CD4-positive, alpha-beta T cell (primary cell): ENCODE measurements at regions of chr22 and their contacts with region 1.

Region 1: GRCh38 chr22:19479357-19480172 is at the start of gene CDC45:
- DNase-seq: peak; percentile 88 to 98 (median 91)
- ATAC-seq: peak; percentile 89
- H3K4me3 ChIP-seq: peak within 1 kb of the TSS; percentile 75
- H3K4me3 Mint-ChIP-seq: peak within 1 kb of the TSS; percentile 96
- H3K27ac ChIP-seq: peak within 1 kb of the TSS; percentile 95 to 98
- H3K27ac Mint-ChIP-seq: peak within 1 kb of the TSS; percentile 100
- H3K4me1 ChIP-seq: peaks cover 22% of the 10 kb centered on the region
- H3K4me1 Mint-ChIP-seq: peaks cover 31% of the 10 kb centered on the region
- H3K27me3 ChIP-seq: no peaks in the 10 kb centered on the region
- H3K27me3 Mint-ChIP-seq: no peaks in the 10 kb centered on the region
- CTCF ChIP-seq: no peak
- total RNA-seq, gene CDC45: 0.75 to 0.82 TPM

Region 2: DNA sequence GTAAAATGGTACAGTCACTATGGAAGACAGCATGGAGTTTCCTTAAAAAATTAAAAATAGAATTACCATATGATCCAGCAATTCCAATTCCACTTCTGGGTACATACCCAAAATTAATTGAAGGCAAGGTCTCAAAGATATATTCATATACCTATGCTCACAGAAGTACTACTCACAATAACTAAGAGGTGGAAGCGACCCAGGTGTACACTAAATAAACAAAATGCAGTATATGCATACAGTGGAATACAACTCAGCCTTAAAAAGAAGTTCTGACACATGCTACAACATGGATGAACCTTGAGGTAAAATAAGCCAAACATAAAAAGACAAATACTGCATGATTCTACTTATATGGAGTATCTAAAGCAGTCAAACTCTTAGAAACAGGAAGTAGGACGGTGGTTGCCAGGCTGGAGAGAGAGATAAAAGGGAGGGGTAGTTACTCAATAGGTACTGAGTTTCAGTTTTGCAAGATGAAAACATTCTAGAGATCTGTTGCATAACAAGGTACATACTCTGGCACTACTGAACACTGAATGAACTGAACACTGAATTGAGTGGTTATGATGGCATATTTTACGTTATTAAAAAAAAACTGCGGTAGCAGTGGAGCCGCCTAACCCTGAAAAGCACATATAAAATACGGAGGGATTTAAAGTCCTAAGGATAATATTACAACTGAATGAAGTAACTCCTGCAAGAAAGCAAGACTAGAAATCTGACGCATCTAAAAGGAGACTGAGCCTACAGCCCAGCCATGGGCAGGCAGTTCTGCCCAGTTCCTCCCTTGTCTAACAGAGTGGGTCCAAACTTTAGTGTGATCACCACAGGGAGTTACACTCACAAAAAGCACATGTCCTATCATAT is 370.1 kb before region 1 on chr22:
- CTCF ChIA-PET with region 1: no interaction called
- POLR2A ChIA-PET with region 1: no interaction called
- intact Hi-C with region 1: loop called in 1 of 2 experiments (anchors 1 kb)
- DNase-seq: peak; percentile 28 to 88 (median 52)
- ATAC-seq: peak; percentile 84
- H3K4me3 ChIP-seq: peak overlapping the region; percentile 40
- H3K4me3 Mint-ChIP-seq: peak overlapping the region; percentile 84
- H3K27ac ChIP-seq: peak overlapping the region; percentile 85 to 90
- H3K27ac Mint-ChIP-seq: peak overlapping the region; percentile 86
- H3K4me1 ChIP-seq: peaks cover 62% of the 10 kb centered on the region
- H3K4me1 Mint-ChIP-seq: peaks cover 75% of the 10 kb centered on the region
- H3K27me3 ChIP-seq: no peaks in the 10 kb centered on the region
- H3K27me3 Mint-ChIP-seq: no peaks in the 10 kb centered on the region
- CTCF ChIP-seq: no peak

Region 3: DNA sequence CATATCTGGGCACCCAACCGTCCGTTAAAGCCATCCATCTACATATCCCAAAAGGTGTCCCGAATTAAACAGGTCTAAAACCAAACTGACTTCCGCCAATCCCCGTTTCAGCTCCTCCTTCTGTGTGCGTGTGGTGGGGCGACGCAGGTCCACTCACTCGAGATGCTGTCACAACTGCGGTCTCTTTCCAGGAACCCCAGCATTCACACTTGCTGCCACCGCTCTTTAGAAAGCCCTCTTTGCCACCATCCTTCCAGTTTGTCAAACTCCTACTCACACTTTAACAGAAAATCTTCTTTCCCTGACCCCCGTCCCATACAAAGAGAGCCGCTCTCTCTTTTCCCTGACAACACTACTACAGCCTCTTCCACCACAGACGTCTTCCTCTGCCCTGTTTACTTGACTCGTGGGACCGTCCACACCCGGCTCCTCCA is 335.6 kb before region 1 on chr22:
- CTCF ChIA-PET with region 1: interaction called, 13 read pairs
- POLR2A ChIA-PET with region 1: interaction called, 16 read pairs
- intact Hi-C with region 1: loop called (anchors 1 to 10 kb)
- DNase-seq: peak in 7 of 14 experiments; percentile 13 to 66 (median 25)
- ATAC-seq: peak; percentile 16
- H3K4me3 ChIP-seq: peak overlapping the region; percentile 90
- H3K4me3 Mint-ChIP-seq: peak overlapping the region; percentile 97
- H3K27ac ChIP-seq: peak overlapping the region; percentile 81 to 86
- H3K27ac Mint-ChIP-seq: peak overlapping the region; percentile 94
- H3K4me1 ChIP-seq: peaks cover 23% of the 10 kb centered on the region
- H3K4me1 Mint-ChIP-seq: peaks cover 22% of the 10 kb centered on the region
- H3K27me3 ChIP-seq: peaks cover 10 to 16% of the 10 kb centered on the region in 2 experiments
- H3K27me3 Mint-ChIP-seq: peaks cover 16% of the 10 kb centered on the region
- CTCF ChIP-seq: no peak

Region 4: DNA sequence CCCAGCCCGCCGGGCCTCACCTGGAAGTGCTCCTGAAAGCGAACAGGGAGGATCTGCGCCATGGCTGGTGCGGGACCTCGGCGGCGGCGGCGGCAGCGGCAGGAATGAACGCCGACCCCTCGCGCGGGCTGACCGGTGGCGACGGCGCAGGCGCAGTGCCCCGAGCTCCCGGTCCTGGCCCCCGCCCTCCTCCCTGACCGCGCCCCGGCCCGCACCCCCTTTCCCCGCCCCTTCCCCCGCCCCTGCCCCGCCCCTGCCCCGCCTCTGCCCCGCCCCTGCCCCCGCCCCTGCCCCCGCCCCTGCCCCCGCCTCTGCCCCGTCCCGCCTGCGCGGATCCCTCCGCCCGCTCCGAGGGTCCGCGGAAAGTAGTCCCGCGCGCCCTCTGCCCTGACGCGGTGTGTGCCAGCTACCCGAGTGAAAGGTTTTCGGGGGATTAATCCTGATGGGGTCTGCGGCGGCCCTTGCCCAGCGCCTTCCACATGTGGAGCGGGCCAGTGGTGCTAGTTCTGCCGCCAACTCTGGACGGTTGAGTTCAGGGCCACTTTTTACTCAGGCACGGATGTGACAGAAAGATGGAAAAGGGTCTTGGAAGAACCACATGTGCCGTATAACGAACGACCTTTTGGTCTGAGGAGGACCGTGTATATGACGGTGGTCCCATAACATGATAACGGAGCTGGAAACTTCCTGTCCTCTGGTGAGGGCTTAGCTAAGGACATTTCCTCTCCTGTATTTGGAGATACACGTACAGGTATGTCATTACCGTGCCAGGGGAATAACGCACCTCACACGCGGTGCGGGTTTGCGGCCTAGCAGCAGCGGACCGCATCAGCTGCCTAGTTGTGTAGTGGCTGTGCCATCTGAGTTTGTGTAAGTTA is 187.7 kb before region 1 on chr22 and contains the start of gene CLTCL1:
- CTCF ChIA-PET with region 1: no interaction called
- POLR2A ChIA-PET with region 1: no interaction called
- intact Hi-C with region 1: loop called in 1 of 2 experiments (anchors 2 kb)
- DNase-seq: peak; percentile 44 to 82 (median 63)
- ATAC-seq: peak; percentile 69
- H3K4me3 ChIP-seq: peak within 1 kb of the TSS; percentile 73
- H3K4me3 Mint-ChIP-seq: peak within 1 kb of the TSS; percentile 91
- H3K27ac ChIP-seq: no peak within 1 kb of the TSS
- H3K27ac Mint-ChIP-seq: peak within 1 kb of the TSS; percentile 67
- H3K4me1 ChIP-seq: peaks cover 21% of the 10 kb centered on the region
- H3K4me1 Mint-ChIP-seq: peaks cover 17% of the 10 kb centered on the region
- H3K27me3 ChIP-seq: peaks cover 0 to 14% of the 10 kb centered on the region in 2 experiments
- H3K27me3 Mint-ChIP-seq: peaks cover 5% of the 10 kb centered on the region
- CTCF ChIP-seq: no peak
- total RNA-seq, gene CLTCL1: 0.52 to 1.5 TPM

Region 5: GRCh38 chr22:19447388-19448075 is 32.0 kb before region 1 on chr22 and contains the start of gene C22orf39:
- CTCF ChIA-PET with region 1: interaction called, 4 read pairs
- POLR2A ChIA-PET with region 1: interaction called, 23 read pairs
- intact Hi-C with region 1: loop called (anchors 1 kb)
- DNase-seq: peak; percentile 75 to 96 (median 85)
- ATAC-seq: peak; percentile 92
- H3K4me3 ChIP-seq: peak within 1 kb of the TSS; percentile 88
- H3K4me3 Mint-ChIP-seq: peak within 1 kb of the TSS; percentile 93
- H3K27ac ChIP-seq: peak within 1 kb of the TSS; percentile 82 to 85
- H3K27ac Mint-ChIP-seq: peak within 1 kb of the TSS; percentile 91
- H3K4me1 ChIP-seq: peaks cover 38% of the 10 kb centered on the region
- H3K4me1 Mint-ChIP-seq: peaks cover 52% of the 10 kb centered on the region
- H3K27me3 ChIP-seq: no peaks in the 10 kb centered on the region
- H3K27me3 Mint-ChIP-seq: no peaks in the 10 kb centered on the region
- CTCF ChIP-seq: no peak
- total RNA-seq, gene C22orf39: 30.2 to 32.6 TPM

Region 6: GRCh38 chr22:19629720-19630419 is 150.3 kb after region 1 on chr22:
- CTCF ChIA-PET with region 1: interaction called, 13 read pairs
- POLR2A ChIA-PET with region 1: interaction called, 11 read pairs
- intact Hi-C with region 1: loop called in 1 of 2 experiments (anchors 5 kb)
- DNase-seq: peak; percentile 78 to 91 (median 86)
- ATAC-seq: peak; percentile 99
- H3K4me3 ChIP-seq: no peak overlapping the region
- H3K4me3 Mint-ChIP-seq: no peak overlapping the region
- H3K27ac ChIP-seq: no peak overlapping the region
- H3K27ac Mint-ChIP-seq: no peak overlapping the region
- H3K4me1 ChIP-seq: peaks cover 7% of the 10 kb centered on the region
- H3K4me1 Mint-ChIP-seq: peaks cover 6% of the 10 kb centered on the region
- H3K27me3 ChIP-seq: no peaks in the 10 kb centered on the region
- H3K27me3 Mint-ChIP-seq: no peaks in the 10 kb centered on the region
- CTCF ChIP-seq: peak; percentile 91

Region 7: GRCh38 chr22:19929586-19930550 is 450.3 kb after region 1 on chr22:
- CTCF ChIA-PET with region 1: no interaction called
- POLR2A ChIA-PET with region 1: no interaction called
- intact Hi-C with region 1: loop called in 1 of 2 experiments (anchors 10 kb)
- DNase-seq: no peak
- ATAC-seq: no peak
- H3K4me3 ChIP-seq: no peak overlapping the region
- H3K4me3 Mint-ChIP-seq: no peak overlapping the region
- H3K27ac ChIP-seq: no peak overlapping the region
- H3K27ac Mint-ChIP-seq: no peak overlapping the region
- H3K4me1 ChIP-seq: no peaks in the 10 kb centered on the region
- H3K4me1 Mint-ChIP-seq: no peaks in the 10 kb centered on the region
- H3K27me3 ChIP-seq: no peaks in the 10 kb centered on the region
- H3K27me3 Mint-ChIP-seq: no peaks in the 10 kb centered on the region
- CTCF ChIP-seq: no peak

Region 8: GRCh38 chr22:20469110-20469868 is 989.7 kb after region 1 on chr22:
- CTCF ChIA-PET with region 1: no interaction called
- POLR2A ChIA-PET with region 1: no interaction called
- intact Hi-C with region 1: no loop called
- DNase-seq: peak in 1 of 14 experiments; percentile 54
- ATAC-seq: peak; percentile 37
- H3K4me3 ChIP-seq: no peak overlapping the region
- H3K4me3 Mint-ChIP-seq: no peak overlapping the region
- H3K27ac ChIP-seq: no peak overlapping the region
- H3K27ac Mint-ChIP-seq: peak overlapping the region; percentile 74
- H3K4me1 ChIP-seq: peaks cover 54% of the 10 kb centered on the region
- H3K4me1 Mint-ChIP-seq: peaks cover 48% of the 10 kb centered on the region
- H3K27me3 ChIP-seq: no peaks in the 10 kb centered on the region
- H3K27me3 Mint-ChIP-seq: no peaks in the 10 kb centered on the region
- CTCF ChIP-seq: no peak